ENCODE measurements at regions of chr19 and their contacts with region 1.

Region 1: DNA sequence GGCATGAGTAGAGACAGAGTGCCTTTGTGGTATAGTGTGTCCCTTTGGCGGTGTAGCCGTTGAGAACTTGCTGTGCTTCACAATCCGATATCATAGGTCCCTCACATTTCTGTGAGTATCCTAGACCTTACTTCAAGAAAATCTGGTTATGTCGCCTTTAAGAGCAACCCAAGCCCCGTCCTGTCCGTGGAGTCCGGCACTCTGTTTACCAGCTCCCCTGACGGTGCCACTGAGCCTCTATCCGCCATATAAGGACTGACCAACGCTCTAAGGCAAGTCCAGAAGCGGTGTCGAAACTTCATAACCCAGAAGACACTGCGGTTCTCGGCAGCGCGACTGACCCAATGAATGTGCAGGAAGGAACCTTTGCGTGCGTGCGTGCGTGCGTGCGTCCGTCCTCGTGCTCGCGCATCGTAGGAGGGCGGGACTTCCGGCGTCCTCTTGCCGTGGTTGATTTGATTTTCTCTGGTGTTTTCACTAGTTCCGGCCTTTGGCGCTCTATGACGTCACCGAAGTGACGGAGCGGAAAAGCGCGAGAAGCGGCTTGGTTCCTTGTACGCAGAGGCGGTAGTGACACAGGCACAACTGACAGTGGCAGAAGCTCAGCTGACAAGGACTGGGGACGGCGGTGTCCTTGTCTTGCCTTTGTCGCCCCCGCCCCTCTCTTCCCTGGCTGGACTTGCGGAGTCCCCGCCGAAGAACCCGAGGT is at the starts of genes TRAPPC2B and ZNF547:
- DNase-seq: peak; percentile 99
- ATAC-seq: peak; percentile 97
- total RNA-seq, gene TRAPPC2B: 9.7 TPM
- total RNA-seq, gene ZNF547: 2.4 TPM

Region 2: GRCh38 chr19:57320180-57321084 is 42.7 kb before region 1 on chr19 and contains the start of gene ZNF543:
- intact Hi-C with region 1: loop called (anchors 2 kb)
- DNase-seq: peak; percentile 98
- ATAC-seq: peak; percentile 99
- total RNA-seq, gene ZNF543: 5.3 TPM